K562 (cell line): ENCODE measurements at regions of chr19 and their contacts with region 1.

Region 1: DNA sequence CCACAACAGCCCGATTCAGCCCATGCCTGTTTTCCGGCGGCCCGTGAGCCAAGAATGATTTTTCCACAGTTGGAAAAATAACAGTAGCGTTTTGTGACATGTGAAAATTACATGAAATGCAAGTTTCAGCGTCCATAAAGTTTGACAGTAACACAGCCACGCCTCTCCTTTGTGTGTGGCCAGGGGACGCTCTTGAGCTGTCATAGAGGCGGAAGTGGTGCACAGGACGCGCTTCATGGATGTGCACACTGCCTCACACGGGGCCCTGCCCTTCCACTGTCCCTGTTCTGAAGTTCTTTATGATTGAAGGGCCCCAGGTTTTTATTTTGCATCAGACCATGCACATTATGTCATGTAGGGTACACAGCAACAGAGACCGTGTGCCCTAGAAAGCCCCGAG is 12.4 kb upstream of the ELAVL1 start:
- DNase-seq: peak; percentile 57 to 76 (median 62)
- ATAC-seq: peak; percentile 96
- H3K4me3 ChIP-seq: no peak overlapping the region
- H3K27ac ChIP-seq: no peak overlapping the region
- H3K4me1 ChIP-seq: peaks cover 10 to 12% of the 10 kb centered on the region in 2 experiments; a peak in 4 of 5 replicates
- H3K27me3 ChIP-seq: no peaks in the 10 kb centered on the region
- CTCF ChIP-seq: peak; percentile 84 to 89 (median 85)
- EP300 ChIP-seq: no peak
- POLR2A ChIP-seq: no peak
- RAD21 ChIP-seq: peak; percentile 74 to 97

Region 2: DNA sequence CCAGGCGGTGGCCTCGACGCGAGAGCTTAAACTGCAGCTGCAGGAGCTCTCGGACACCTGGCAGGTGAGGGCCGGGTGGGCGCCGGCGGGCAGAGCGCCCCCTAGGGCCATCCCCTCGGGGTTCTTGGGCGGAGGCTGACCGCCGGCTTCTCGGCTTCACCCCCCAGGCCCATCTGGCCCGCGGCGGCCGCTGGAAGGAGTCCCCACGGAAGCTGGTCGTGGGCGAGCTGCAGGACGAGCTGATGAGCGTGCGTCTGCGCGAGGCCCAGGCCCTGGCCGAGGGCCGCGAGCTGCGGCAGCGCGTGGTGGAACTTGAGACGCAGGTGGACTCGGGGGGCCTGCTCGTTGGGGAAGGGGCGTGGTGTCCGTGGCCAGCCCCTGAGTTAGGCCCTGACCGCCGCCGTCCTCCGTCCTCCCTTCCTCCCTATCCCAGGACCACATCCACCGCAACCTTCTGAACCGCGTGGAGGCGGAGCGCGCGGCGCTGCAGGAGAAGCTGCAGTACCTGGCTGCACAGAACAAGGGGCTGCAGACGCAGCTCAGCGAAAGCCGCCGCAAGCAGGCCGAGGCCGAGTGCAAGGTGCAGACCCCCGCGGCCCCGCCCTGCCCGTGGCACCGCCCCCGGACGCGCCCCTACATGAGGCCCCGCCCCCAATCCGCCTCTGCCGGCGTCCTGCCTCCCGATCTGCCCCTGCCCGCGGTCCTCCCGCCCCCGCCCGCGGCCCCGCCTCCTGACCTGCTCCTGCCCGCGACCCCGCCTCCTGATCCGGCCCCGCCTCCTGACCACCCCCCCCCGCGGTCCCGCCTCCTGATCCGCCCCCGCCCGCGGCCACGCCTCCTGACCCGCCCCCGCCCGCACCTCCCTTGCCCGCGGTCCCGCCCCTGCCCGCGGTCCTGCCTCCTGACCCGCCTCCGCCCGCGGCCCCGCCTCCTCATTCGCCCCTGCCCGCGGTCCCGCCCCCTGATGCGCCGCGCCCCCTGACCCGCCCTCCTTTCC is 155.6 kb before region 1 on chr19:
- CTCF ChIA-PET with region 1: no interaction called
- POLR2A ChIA-PET with region 1: no interaction called
- in situ Hi-C with region 1: no loop called
- intact Hi-C with region 1: no loop called
- DNase-seq: peak; percentile 93 to 99 (median 98)
- ATAC-seq: peak; percentile 86
- H3K4me3 ChIP-seq: peak overlapping the region; percentile 36
- H3K27ac ChIP-seq: no peak overlapping the region
- H3K4me1 ChIP-seq: peaks cover 22 to 84% of the 10 kb centered on the region in 2 experiments
- H3K27me3 ChIP-seq: no peaks in the 10 kb centered on the region
- CTCF ChIP-seq: 0 out of 6 replicates have a peak, but pooled peaks of 1 of the 3 experiments have one; percentile 9
- EP300 ChIP-seq: no peak
- POLR2A ChIP-seq: no peak
- RAD21 ChIP-seq: no peak

Region 3: GRCh38 chr19:8069096-8069973 is 51.5 kb after region 1 on chr19:
- CTCF ChIA-PET with region 1: interaction called, 7 read pairs
- POLR2A ChIA-PET with region 1: no interaction called
- in situ Hi-C with region 1: no loop called
- intact Hi-C with region 1: loop called (anchors 1 kb)
- DNase-seq: peak; percentile 49 to 71 (median 51)
- ATAC-seq: peak; percentile 46; the same call in 2 of the 3 replicates
- H3K4me3 ChIP-seq: no peak overlapping the region
- H3K27ac ChIP-seq: no peak overlapping the region
- H3K4me1 ChIP-seq: peaks cover 0 to 14% of the 10 kb centered on the region in 2 experiments; a peak in 2 of 5 replicates
- H3K27me3 ChIP-seq: no peaks in the 10 kb centered on the region
- CTCF ChIP-seq: peak; percentile 73 to 93 (median 84)
- EP300 ChIP-seq: no peak
- POLR2A ChIP-seq: no peak
- RAD21 ChIP-seq: peak; percentile 80 to 90

Region 4: DNA sequence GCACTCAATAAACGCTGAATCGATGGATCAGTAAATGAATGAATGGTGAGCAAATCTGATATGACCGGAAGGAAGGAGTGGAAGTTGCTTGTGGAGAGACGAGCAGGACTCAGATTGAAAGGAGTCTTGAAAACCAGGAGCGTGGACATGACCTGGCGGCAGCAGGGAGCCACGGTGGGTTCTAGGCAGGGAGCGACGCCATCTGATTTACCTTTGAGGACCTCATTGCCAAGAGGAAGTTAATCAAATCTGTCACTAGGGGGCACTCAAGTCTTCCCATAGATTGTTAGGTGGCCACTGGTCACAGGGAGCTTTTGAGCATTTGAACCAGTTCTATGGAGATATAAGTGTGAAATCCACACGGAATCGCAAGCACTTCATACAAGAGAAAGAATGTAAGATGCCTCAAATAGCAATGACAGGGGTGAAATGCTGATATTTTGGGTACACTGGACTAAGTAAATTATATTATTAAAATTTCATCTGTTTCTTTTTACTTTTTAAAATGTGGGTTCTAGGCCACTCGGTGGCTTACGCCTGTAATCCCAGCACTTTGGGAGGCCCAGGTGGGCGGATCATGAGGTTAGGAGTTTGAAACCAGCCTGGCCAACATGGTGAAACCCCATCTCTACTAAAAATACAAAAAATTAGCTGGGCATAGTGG is 140.7 kb after region 1 on chr19:
- CTCF ChIA-PET with region 1: interaction called, 3 read pairs
- POLR2A ChIA-PET with region 1: interaction called, 4 read pairs
- in situ Hi-C with region 1: loop called (anchors 5 kb)
- intact Hi-C with region 1: loop called (anchors 5 kb)
- DNase-seq: peak; percentile 77 to 88 (median 78)
- ATAC-seq: peak; percentile 75
- H3K4me3 ChIP-seq: no peak overlapping the region
- H3K27ac ChIP-seq: no peak overlapping the region
- H3K4me1 ChIP-seq: peaks cover 4 to 13% of the 10 kb centered on the region in 2 experiments; a peak in 3 of 5 replicates
- H3K27me3 ChIP-seq: no peaks in the 10 kb centered on the region
- CTCF ChIP-seq: peak; percentile 75 to 90 (median 83)
- EP300 ChIP-seq: peak; percentile 11; the same call in 1 of the 2 replicates
- POLR2A ChIP-seq: no peak
- RAD21 ChIP-seq: peak; percentile 91 to 96

Region 5: DNA sequence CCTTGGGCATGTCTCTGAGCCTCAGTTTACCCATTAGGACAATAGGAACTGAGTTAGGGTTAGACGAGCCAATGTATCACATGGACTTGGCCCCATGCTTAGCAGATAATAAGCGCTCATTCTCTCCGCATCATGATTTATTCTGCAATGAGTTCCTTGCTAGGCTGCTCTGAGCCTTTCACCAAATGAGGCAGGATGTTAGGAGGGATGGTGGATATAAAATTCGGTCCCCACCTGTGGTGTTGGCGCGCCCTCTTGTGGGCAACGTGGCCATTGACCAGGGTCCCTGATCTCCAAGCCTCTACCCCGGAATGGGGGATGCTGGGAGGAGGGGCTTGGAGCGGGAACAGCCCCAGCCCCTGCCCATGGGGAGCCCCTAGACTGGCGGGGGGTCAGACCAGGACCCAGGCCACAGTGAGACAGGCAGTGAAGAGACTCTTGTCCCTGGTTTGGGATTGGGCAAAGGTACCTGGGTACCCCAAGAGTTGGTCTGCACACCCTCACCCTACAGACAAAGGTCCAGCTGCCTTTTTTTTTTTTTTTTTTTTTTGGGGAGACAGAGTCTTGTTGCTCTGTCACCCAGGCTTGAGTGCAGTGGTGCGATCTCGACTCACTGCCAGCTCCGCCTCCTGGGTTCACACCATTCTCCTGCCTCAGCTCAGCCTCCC is 235.2 kb after region 1 on chr19:
- CTCF ChIA-PET with region 1: interaction called, 3 read pairs
- POLR2A ChIA-PET with region 1: no interaction called
- in situ Hi-C with region 1: loop called (anchors 5 kb)
- intact Hi-C with region 1: loop called (anchors 10 kb)
- DNase-seq: peak; percentile 88 to 90 (median 90)
- ATAC-seq: peak; percentile 90
- H3K4me3 ChIP-seq: no peak overlapping the region
- H3K27ac ChIP-seq: no peak overlapping the region
- H3K4me1 ChIP-seq: peaks cover 13 to 42% of the 10 kb centered on the region in 2 experiments; a peak in 4 of 5 replicates
- H3K27me3 ChIP-seq: no peaks in the 10 kb centered on the region
- CTCF ChIP-seq: peak; percentile 95 to 97 (median 97)
- EP300 ChIP-seq: no peak
- POLR2A ChIP-seq: no peak
- RAD21 ChIP-seq: peak; percentile 98 to 99